ENCODE measurements at regions of chr1 and their contacts with region 1.

Region 1: DNA sequence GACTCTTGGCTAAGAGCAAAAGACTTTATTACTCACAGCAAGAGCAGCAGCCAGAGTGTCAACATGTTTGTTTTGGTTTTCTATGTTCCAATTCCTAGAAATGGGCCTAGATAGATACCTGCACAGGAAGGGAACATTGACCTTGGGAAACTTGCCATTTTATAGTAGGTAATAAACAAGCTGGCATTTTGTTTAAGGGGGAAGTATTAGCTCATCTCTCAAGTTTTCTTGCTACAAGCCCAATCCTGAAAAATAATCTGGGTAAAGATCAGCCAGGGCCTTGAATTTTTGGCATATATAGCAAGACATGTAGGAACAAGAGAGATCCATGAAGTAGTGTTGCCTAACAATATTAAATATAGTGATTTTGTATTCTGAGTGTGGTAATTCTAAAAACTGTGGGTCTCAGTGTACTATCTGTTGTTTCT is 51.4 kb upstream of the RGL1 start:
- DNase-seq: no peak
- H3K4me3 ChIP-seq: no peak overlapping the region
- H3K4me3 Mint-ChIP-seq: no peak overlapping the region
- H3K27ac ChIP-seq: no peak overlapping the region
- H3K27ac Mint-ChIP-seq: no peak overlapping the region
- H3K4me1 ChIP-seq: no peaks in the 10 kb centered on the region
- H3K4me1 Mint-ChIP-seq: no peaks in the 10 kb centered on the region
- H3K27me3 ChIP-seq: no peaks in the 10 kb centered on the region
- H3K27me3 Mint-ChIP-seq: peaks cover 0 to 4% (median 0%) of the 10 kb centered on the region in 3 donors
- CTCF ChIP-seq: no peak

Region 2: GRCh38 chr1:183655562-183656075 is 97.9 kb before region 1 on chr1:
- intact Hi-C with region 1: no loop called
- DNase-seq: peak; percentile 60 to 73 (median 72)
- H3K4me3 ChIP-seq: no peak overlapping the region
- H3K4me3 Mint-ChIP-seq: no peak overlapping the region
- H3K27ac ChIP-seq: no peak overlapping the region
- H3K27ac Mint-ChIP-seq: peak overlapping the region in 2 of 7 donors; percentile 11 to 31
- H3K4me1 ChIP-seq: peaks cover 11 to 12% of the 10 kb centered on the region in 2 donors
- H3K4me1 Mint-ChIP-seq: peaks cover 21% of the 10 kb centered on the region
- H3K27me3 ChIP-seq: no peaks in the 10 kb centered on the region
- H3K27me3 Mint-ChIP-seq: peaks cover 0 to 3% (median 0%) of the 10 kb centered on the region in 3 donors
- CTCF ChIP-seq: peak; percentile 91

Region 3: DNA sequence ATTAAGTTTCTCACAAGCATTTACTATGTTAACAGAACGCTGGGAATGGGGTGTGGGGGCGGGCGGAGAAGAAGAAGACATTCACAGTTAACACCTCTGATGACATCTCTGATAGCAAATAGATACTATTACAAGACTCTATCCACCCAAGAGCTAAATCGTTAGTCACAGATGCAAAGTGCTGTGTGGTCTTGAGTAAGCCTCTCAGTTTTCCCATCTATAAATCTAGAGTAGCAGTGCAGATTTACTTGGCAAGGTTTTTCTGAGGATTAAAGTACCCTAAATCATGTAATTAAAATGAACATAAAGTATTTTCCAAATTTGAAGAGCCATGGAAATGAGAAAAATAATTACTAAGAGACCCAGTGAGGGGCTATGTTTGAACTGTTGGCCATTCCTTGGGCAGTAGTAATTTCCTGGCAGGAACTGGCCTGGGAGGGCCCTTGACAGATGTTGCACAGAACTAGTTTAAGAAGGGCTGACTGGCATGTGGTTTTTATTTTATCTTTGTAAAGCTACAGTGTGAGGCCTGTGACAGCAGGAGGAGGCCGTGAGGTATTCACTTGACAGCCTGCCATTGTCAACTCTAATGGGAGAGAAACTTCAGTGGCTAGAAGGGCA is 41.6 kb before region 1 on chr1:
- intact Hi-C with region 1: loop called in 1 of 2 experiments (anchors 2 kb)
- DNase-seq: no peak
- H3K4me3 ChIP-seq: no peak overlapping the region
- H3K4me3 Mint-ChIP-seq: no peak overlapping the region
- H3K27ac ChIP-seq: no peak overlapping the region
- H3K27ac Mint-ChIP-seq: peak overlapping the region in 1 of 7 donors; percentile 6
- H3K4me1 ChIP-seq: no peaks in the 10 kb centered on the region
- H3K4me1 Mint-ChIP-seq: no peaks in the 10 kb centered on the region
- H3K27me3 ChIP-seq: no peaks in the 10 kb centered on the region
- H3K27me3 Mint-ChIP-seq: peaks cover 0 to 4% (median 0%) of the 10 kb centered on the region in 3 donors
- CTCF ChIP-seq: no peak

Region 4: DNA sequence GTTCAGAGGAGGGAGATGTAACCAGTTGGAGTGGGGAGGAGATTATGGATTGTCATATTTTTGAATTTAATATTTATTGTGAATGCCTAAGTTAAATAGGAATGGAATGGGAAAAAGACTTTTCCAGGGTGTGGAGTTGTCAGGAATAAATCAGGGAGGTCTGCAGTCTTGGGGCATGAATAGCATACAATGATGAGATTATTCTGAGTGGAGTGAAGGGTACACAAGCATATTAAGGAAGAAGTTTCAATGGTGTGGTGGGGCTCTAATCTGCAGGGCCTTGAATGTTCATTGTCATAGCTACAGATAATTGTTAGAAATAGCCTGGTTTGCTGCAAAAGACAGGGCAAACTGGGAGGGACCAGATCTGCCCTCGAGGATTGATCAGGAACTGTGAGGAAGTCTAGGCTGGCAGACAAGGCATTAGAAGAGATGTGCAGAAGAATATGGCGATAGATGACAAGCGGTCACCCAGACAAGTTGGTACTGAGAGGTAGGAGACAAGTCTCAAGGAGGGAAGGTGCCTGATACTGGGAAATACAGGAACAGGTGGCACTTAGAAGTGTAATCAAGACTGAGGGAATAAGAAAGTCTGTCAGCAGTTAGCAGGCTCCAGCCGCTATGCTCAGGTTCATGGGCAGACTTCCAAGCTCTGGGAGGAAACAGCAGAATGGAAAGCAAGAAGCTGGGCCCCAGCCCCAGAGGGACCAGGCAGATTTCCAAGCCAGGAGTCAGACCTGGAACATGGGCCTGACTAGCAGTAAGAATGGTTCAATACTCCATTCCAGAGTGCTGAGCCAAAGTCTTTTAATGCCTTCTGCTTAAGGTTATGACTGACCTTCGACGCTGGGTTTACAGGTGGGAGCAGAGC is 30.5 kb after region 1 on chr1:
- intact Hi-C with region 1: no loop called
- DNase-seq: no peak
- H3K4me3 ChIP-seq: no peak overlapping the region
- H3K4me3 Mint-ChIP-seq: peak overlapping the region in 1 of 2 donors; percentile 40
- H3K27ac ChIP-seq: no peak overlapping the region
- H3K27ac Mint-ChIP-seq: no peak overlapping the region
- H3K4me1 ChIP-seq: no peaks in the 10 kb centered on the region
- H3K4me1 Mint-ChIP-seq: peaks cover 3% of the 10 kb centered on the region
- H3K27me3 ChIP-seq: no peaks in the 10 kb centered on the region
- H3K27me3 Mint-ChIP-seq: peaks cover 2 to 5% (median 3%) of the 10 kb centered on the region in 3 donors
- CTCF ChIP-seq: no peak

Region 5: GRCh38 chr1:183922197-183922596 is 168.7 kb after region 1 on chr1:
- intact Hi-C with region 1: no loop called
- DNase-seq: no peak
- H3K4me3 ChIP-seq: no peak overlapping the region
- H3K4me3 Mint-ChIP-seq: no peak overlapping the region
- H3K27ac ChIP-seq: no peak overlapping the region
- H3K27ac Mint-ChIP-seq: no peak overlapping the region
- H3K4me1 ChIP-seq: no peaks in the 10 kb centered on the region
- H3K4me1 Mint-ChIP-seq: no peaks in the 10 kb centered on the region
- H3K27me3 ChIP-seq: no peaks in the 10 kb centered on the region
- H3K27me3 Mint-ChIP-seq: peaks cover 0 to 3% (median 1%) of the 10 kb centered on the region in 3 donors
- CTCF ChIP-seq: peak; percentile 22

Measured in CD14-positive monocyte (primary cell).